Activated T-helper 1 cell treated with anti-CD3 and anti-CD28 coated beads, Interleukin-12 subunit alpha, Interleukin-12 subunit beta, Interleukin-2, Interleukin-4 antibody, amounts not matched to agents 30 ng/mL and 10 ng/mL and 1 ng/mL, durations not matched to agents 14 hours and 24 hours and 36 hours (primary cell): ENCODE measurements at regions of chr11 and their contacts with region 1.

Region 1: GRCh38 chr11:124875943-124876817 is 10.9 kb downstream of the ROBO3 start:
- DNase-seq: peak; percentile 73
- H3K4me3 Mint-ChIP-seq: peak overlapping the region; percentile 81
- H3K27ac Mint-ChIP-seq: peak overlapping the region; percentile 72
- H3K4me1 Mint-ChIP-seq: peaks cover 12% of the 10 kb centered on the region
- H3K27me3 Mint-ChIP-seq: peaks cover 46% of the 10 kb centered on the region

Region 2: GRCh38 chr11:124622531-124623451 is 253.4 kb before region 1 on chr11 and contains the start of gene TBRG1:
- intact Hi-C with region 1: loop called (anchors 1 kb)
- DNase-seq: peak; percentile 80
- H3K4me3 Mint-ChIP-seq: peak within 1 kb of the TSS; percentile 97
- H3K27ac Mint-ChIP-seq: peak within 1 kb of the TSS; percentile 95
- H3K4me1 Mint-ChIP-seq: peaks cover 29% of the 10 kb centered on the region
- H3K27me3 Mint-ChIP-seq: peaks cover 14% of the 10 kb centered on the region
- total RNA-seq, gene TBRG1: 35.1 and 35.4 TPM in 2 replicates

Region 3: DNA sequence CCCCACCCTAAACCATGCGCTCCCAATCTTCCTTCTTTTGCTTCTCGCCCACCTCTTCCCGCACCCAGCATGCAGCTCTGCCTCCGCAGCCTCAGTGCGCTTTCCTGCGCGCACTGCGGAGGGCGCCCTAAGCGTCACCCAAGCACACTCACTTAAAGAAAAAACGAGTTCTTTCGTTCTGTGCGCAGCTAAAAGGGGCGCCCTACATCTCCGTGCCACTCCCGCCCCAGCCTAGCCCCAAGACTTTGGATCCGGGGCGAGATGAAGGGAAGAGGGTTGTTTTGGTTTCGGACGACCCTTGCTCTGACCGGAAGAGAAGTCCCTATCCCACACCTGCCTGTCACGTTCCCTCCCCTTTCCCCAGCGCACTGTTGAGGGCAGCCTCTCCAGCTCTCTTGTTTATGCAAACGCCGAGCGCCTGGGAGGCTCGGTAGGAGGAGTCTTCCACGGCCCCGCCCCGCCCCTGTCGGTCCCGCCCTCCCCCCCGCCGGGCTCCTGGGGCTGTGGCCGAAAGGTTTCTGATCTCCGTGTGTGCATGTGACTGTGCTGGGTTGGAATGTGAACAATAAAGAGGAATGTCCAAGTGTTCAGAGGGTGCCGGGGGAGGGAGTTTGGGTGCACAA is 129.4 kb before region 1 on chr11:
- intact Hi-C with region 1: loop called (anchors 1 kb)
- DNase-seq: peak; percentile 64
- H3K4me3 Mint-ChIP-seq: peak overlapping the region; percentile 89
- H3K27ac Mint-ChIP-seq: peak overlapping the region; percentile 86
- H3K4me1 Mint-ChIP-seq: peaks cover 28% of the 10 kb centered on the region
- H3K27me3 Mint-ChIP-seq: peaks cover 12% of the 10 kb centered on the region

Region 4: GRCh38 chr11:124800226-124800929 is 75.8 kb before region 1 on chr11 and contains the start of gene MSANTD2:
- intact Hi-C with region 1: loop called (anchors 2 kb)
- DNase-seq: peak; percentile 79
- H3K4me3 Mint-ChIP-seq: peak within 1 kb of the TSS; percentile 91
- H3K27ac Mint-ChIP-seq: peak within 1 kb of the TSS; percentile 92
- H3K4me1 Mint-ChIP-seq: peaks cover 28% of the 10 kb centered on the region
- H3K27me3 Mint-ChIP-seq: peaks cover 8% of the 10 kb centered on the region
- total RNA-seq, gene MSANTD2: 8.9 and 9.7 TPM in 2 replicates

Region 5: GRCh38 chr11:124920870-124921609 is 44.9 kb after region 1 on chr11:
- intact Hi-C with region 1: loop called (anchors 1 kb)
- DNase-seq: peak; percentile 62
- H3K4me3 Mint-ChIP-seq: no peak overlapping the region
- H3K27ac Mint-ChIP-seq: no peak overlapping the region
- H3K4me1 Mint-ChIP-seq: peaks cover 10% of the 10 kb centered on the region
- H3K27me3 Mint-ChIP-seq: peaks cover 8% of the 10 kb centered on the region

Region 6: GRCh38 chr11:125141686-125142535 is 265.7 kb after region 1 on chr11:
- intact Hi-C with region 1: loop called (anchors 10 kb)
- DNase-seq: peak; percentile 23
- H3K4me3 Mint-ChIP-seq: no peak overlapping the region
- H3K27ac Mint-ChIP-seq: no peak overlapping the region
- H3K4me1 Mint-ChIP-seq: no peaks in the 10 kb centered on the region
- H3K27me3 Mint-ChIP-seq: peaks cover 24% of the 10 kb centered on the region